ENCODE measurements at regions of chr12 and their contacts with region 1.

Region 1: DNA sequence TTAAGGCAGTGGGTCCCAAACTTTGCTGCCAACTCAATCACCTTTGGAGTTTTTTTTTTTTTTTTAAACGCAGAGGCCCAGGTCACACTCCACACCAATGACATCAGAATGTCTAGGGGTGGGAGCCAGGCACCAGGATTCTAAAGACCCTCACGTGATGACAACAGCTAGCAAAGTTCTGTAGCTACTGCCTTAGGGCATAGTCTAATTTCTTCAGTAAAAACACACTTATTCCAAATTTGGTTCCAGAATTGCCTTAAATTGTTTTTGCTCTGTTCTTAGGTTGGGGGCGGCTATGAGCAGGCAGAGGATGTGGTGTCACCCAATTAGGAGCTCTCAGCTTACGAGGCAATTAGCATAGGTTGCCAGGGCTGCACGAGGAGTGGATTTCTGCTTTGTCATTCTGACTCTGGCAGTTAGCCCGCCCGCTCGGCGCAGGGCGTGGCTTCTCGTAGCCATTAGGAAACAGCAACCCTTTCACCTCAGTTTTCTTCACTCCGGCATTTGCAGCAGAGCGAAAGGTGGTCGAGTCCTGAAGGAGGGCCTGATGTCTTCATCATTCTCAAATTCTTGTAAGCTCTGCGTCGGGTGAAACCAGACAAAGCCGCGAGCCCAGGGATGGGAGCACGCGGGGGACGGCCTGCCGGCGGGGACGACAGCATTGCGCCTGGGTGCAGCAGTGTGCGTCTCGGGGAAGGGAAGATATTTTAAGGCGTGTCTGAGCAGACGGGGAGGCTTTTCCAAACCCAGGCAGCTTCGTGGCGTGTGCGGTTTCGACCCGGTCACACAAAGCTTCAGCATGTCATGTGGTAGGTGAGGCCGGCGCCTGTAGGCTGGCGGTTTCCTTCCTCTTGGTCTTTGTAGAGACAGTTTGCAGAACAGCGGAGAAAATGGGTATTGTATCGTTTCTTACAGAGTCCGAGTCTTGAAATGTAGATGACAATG is 16.7 kb upstream of the EID3 start:
- DNase-seq: peak; percentile 92 to 94
- H3K4me3 ChIP-seq: peak overlapping the region; percentile 84
- H3K4me3 Mint-ChIP-seq: peak overlapping the region; percentile 95
- H3K27ac Mint-ChIP-seq: peak overlapping the region; percentile 99
- H3K4me1 ChIP-seq: peaks cover 11% of the 10 kb centered on the region
- H3K4me1 Mint-ChIP-seq: peaks cover 11% of the 10 kb centered on the region
- H3K27me3 ChIP-seq: no peaks in the 10 kb centered on the region
- H3K27me3 Mint-ChIP-seq: no peaks in the 10 kb centered on the region
- CTCF ChIP-seq: no peak

Region 2: DNA sequence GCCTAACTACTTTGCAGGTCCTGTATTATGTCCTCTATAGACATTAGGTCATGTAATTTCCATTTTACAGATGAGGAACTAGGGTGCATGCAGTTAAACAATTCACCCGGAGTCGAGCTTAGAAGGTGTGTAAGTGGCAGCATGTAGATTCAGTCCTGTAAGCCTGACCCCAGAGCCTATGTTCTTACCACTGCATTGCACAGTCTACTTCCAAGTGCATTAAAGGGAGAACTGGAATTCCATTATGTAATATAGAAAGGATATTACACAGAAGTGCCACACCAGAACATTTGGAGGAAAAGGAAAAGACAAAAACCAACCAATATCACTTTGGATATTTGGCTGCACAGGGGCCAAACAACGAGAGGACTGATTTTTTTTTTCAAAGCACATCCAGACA is 238.0 kb before region 1 on chr12:
- CTCF ChIA-PET with region 1: no interaction called
- POLR2A ChIA-PET with region 1: no interaction called
- intact Hi-C with region 1: no loop called
- DNase-seq: no peak
- H3K4me3 ChIP-seq: no peak overlapping the region
- H3K4me3 Mint-ChIP-seq: no peak overlapping the region
- H3K27ac Mint-ChIP-seq: no peak overlapping the region
- H3K4me1 ChIP-seq: no peaks in the 10 kb centered on the region
- H3K4me1 Mint-ChIP-seq: no peaks in the 10 kb centered on the region
- H3K27me3 ChIP-seq: no peaks in the 10 kb centered on the region
- H3K27me3 Mint-ChIP-seq: peaks cover 9% of the 10 kb centered on the region
- CTCF ChIP-seq: no peak

Region 3: DNA sequence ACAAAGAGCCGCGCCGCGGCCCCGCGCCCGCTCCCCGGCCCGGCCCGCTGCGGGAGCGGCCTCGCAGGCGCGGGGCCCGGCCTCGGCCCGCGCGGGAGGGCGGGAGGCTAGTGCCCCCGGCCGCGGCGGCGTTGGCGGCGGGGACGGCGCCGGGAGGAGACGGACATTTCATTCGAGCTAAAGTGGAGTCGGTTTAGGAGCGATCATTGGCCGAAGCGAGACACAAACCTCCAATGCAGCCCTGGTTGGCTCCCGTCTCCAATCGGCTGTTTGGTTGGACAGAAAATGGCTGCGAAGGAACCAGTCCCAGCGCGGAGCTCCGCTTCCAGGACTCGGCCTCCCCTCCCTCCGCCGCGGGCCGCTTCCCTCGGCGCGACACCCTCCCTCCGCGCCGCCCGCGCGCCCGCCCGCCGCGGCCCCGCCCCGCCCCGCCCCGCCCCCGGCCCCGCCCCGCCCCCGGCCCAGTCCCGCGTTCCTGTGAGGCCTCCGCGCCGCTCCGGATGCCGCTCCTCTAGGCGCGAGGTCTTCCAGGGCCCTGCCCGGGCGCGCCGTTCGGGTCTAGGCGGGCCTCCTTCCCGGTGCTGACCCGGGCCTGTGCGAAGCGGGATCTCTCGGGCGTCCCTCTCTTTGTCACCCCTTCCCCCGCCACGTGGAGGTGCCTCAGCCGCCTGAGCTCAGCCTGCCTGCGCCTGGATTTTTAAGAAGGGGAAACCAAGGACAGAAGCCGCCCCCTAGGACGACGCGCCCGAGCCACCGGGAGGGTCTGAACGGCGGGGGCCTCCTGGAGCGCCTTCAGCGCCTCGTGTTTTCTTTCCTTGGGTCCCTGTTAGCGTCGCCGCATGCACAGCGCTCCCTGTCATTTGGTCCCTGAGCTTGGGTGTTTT is 148.7 kb before region 1 on chr12 and contains the start of gene NFYB:
- CTCF ChIA-PET with region 1: no interaction called
- POLR2A ChIA-PET with region 1: interaction called, 33 read pairs
- intact Hi-C with region 1: loop called (anchors 2 kb)
- DNase-seq: peak; percentile 94 to 96
- H3K4me3 ChIP-seq: peak within 1 kb of the TSS; percentile 73
- H3K4me3 Mint-ChIP-seq: peak within 1 kb of the TSS; percentile 75
- H3K27ac Mint-ChIP-seq: peak within 1 kb of the TSS; percentile 47
- H3K4me1 ChIP-seq: peaks cover 8% of the 10 kb centered on the region; the same call in 1 of the 2 replicates
- H3K4me1 Mint-ChIP-seq: no peaks in the 10 kb centered on the region
- H3K27me3 ChIP-seq: no peaks in the 10 kb centered on the region
- H3K27me3 Mint-ChIP-seq: peaks cover 4% of the 10 kb centered on the region
- CTCF ChIP-seq: no peak
- total RNA-seq, gene NFYB: 30.8 and 36.9 TPM in 2 replicates

Region 4: DNA sequence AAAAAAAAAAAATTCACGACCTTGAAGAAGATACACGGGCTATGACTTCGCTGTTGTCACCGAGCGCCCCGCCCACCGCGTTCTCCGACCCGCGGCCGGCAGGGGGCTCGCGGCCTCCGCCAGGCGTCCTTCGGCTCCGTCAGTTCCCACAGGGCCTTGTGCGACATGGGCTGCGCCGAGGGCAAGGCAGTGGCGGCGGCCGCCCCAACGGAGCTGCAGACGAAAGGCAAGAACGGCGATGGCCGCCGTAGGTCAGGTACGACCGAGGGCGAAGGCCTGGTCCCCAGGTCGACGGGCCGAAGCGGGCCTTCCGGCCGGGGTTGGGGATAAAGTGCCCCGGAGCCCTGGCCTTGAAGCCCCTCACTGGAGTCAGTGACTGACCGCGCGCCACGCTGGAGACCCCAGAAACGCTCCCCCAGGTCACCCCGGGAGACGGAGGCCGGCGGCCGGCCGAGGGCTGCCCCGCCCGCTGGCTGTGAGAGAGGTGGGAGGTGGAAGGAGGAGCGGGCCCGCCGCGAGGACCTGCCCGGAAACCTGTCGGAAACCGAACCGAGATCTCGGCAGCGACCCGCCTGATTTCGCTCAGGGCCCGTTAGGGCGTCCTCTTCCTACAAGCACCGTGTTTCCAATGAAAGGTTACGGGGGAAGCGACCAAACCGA is 71.0 kb before region 1 on chr12 and contains the start of gene TXNRD1:
- CTCF ChIA-PET with region 1: no interaction called
- POLR2A ChIA-PET with region 1: interaction called, 5 read pairs
- intact Hi-C with region 1: loop called (anchors 5 kb)
- DNase-seq: no peak
- H3K4me3 ChIP-seq: no peak within 1 kb of the TSS
- H3K4me3 Mint-ChIP-seq: no peak within 1 kb of the TSS
- H3K27ac Mint-ChIP-seq: no peak within 1 kb of the TSS
- H3K4me1 ChIP-seq: peaks cover 17% of the 10 kb centered on the region
- H3K4me1 Mint-ChIP-seq: peaks cover 12% of the 10 kb centered on the region
- H3K27me3 ChIP-seq: no peaks in the 10 kb centered on the region
- H3K27me3 Mint-ChIP-seq: no peaks in the 10 kb centered on the region
- CTCF ChIP-seq: no peak
- total RNA-seq, gene TXNRD1: 104 and 115 TPM in 2 replicates

Region 5: GRCh38 chr12:104276273-104277131 is 10.3 kb before region 1 on chr12:
- CTCF ChIA-PET with region 1: no interaction called
- POLR2A ChIA-PET with region 1: interaction called, 19 read pairs
- intact Hi-C with region 1: no loop called
- DNase-seq: no peak
- H3K4me3 ChIP-seq: no peak overlapping the region
- H3K4me3 Mint-ChIP-seq: no peak overlapping the region
- H3K27ac Mint-ChIP-seq: no peak overlapping the region
- H3K4me1 ChIP-seq: peaks cover 3% of the 10 kb centered on the region
- H3K4me1 Mint-ChIP-seq: peaks cover 10% of the 10 kb centered on the region
- H3K27me3 ChIP-seq: no peaks in the 10 kb centered on the region
- H3K27me3 Mint-ChIP-seq: no peaks in the 10 kb centered on the region
- CTCF ChIP-seq: no peak

Measured in Caco-2 (cell line).